Aorta (tissue), 5 donors: ENCODE measurements at regions of chr15 and their contacts with region 1.

Region 1: GRCh38 chr15:80970018-80970658 is 19.5 kb downstream of the MESD start:
- DNase-seq: no peak
- ATAC-seq: peak; percentile 85
- H3K4me3 ChIP-seq: no peak overlapping the region
- H3K27ac ChIP-seq: no peak overlapping the region
- H3K4me1 ChIP-seq: no peaks in the 10 kb centered on the region
- H3K27me3 ChIP-seq: no peaks in the 10 kb centered on the region

Region 2: GRCh38 chr15:80455668-80456442 is 514.3 kb before region 1 on chr15:
- intact Hi-C with region 1: loop called (anchors 5 kb)
- DNase-seq: peak in 1 of 2 donors; percentile 65
- ATAC-seq: peak; percentile 70
- H3K4me3 ChIP-seq: no peak overlapping the region
- H3K27ac ChIP-seq: no peak overlapping the region
- H3K4me1 ChIP-seq: no peaks in the 10 kb centered on the region
- H3K27me3 ChIP-seq: no peaks in the 10 kb centered on the region

Region 3: GRCh38 chr15:80567721-80568157 is 402.4 kb before region 1 on chr15:
- intact Hi-C with region 1: loop called (anchors 2 to 5 kb)
- DNase-seq: peak in 1 of 2 donors; percentile 55
- ATAC-seq: peak; percentile 80
- H3K4me3 ChIP-seq: no peak overlapping the region
- H3K27ac ChIP-seq: no peak overlapping the region
- H3K4me1 ChIP-seq: no peaks in the 10 kb centered on the region
- H3K27me3 ChIP-seq: no peaks in the 10 kb centered on the region

Region 4: GRCh38 chr15:80695104-80695910 is 274.8 kb before region 1 on chr15 and contains the start of gene ABHD17C:
- intact Hi-C with region 1: loop called (anchors 10 kb)
- DNase-seq: peak; percentile 75 to 88
- ATAC-seq: peak; percentile 82
- H3K4me3 ChIP-seq: peak within 1 kb of the TSS; percentile 94 to 99
- H3K27ac ChIP-seq: peak within 1 kb of the TSS; percentile 70 to 84
- H3K4me1 ChIP-seq: no peaks in the 10 kb centered on the region
- H3K27me3 ChIP-seq: no peaks in the 10 kb centered on the region
- total RNA-seq, gene ABHD17C: 4.2 to 8.3 TPM

Region 5: DNA sequence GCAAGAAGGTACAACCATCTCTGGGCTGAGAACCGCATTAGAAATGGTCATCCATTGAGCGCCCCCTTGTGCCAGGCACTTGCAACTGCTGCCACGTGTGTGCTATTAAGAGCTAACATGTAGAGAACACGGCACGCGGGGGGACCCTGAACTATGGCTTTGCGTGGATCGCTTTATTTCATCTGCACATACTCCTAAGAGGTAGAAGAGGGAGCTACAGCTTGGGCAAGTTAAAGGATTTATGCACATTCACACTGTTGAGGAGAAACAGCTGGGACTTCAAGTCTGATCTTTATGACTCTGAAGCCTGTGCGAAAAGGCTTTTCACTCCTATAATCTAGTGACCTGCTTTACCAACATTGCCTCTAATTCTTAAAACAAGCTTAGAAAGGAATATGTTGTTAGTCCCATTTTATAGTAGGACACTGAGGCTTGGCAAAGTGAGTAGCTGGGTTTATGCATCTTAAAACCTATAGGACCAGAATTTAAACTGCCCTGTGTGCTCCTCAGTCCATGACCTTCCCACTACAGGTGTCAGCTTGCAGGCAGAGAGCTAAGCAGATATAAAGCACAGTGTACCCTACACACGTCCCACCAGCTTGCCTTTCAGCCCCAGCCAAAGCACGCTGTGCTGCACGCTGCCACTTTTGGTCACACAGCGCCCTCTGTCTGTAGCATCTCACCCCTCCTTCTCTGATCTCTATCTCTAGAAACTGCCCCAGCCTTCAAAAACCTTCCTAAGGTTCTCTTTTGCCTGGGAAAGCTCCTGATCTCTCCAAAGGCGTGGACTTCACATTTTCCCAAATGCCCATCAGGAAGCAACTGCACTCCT is 296.0 kb after region 1 on chr15:
- intact Hi-C with region 1: loop called in 1 of 2 experiments (anchors 10 kb)
- DNase-seq: peak; percentile 86 to 92
- ATAC-seq: peak; percentile 94
- H3K4me3 ChIP-seq: no peak overlapping the region
- H3K27ac ChIP-seq: no peak overlapping the region
- H3K4me1 ChIP-seq: no peaks in the 10 kb centered on the region
- H3K27me3 ChIP-seq: no peaks in the 10 kb centered on the region